ENCODE measurements at regions of chr17 and their contacts with region 1.

Region 1: DNA sequence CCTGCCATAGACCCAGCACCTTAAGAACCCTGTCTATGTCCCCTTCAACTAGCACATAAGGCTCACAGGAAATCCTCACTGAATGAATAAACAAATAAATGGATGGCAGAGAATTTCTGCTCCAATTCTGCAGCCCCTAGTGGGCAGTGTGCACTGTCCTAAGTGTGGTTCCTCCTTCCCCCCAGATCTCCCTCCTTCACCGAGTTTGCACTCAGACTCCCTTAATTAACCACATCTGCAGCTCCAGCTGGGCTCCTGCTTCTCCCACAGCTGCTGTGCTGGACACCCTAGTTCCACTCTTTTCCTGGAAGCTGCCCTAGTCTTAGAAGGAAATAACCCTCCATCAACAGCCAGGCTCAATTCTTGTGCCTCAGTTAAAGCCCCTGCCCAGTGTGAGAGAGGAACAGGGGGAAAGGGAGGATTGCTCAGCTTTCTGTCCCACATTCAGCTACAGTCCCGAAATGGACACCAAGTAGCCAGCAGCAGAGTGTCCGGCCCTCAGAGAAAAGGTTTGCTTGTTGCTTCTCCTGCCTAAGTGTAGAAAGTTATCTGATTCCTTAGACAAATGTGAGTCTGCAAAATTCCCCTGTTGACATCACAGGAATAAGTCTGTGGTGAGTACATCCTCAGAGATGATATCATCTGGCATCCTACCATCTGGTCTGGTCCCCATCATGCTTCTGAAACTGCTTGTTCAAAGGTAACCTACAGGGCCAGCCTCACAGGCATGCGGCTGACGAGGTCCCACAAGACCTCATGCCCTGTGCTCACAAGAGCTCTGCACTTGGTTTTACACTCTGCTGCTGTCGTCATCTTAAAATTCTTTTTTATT is 12.3 kb downstream of the LRRC3C start:
- DNase-seq: peak; percentile 67
- ATAC-seq: peak; percentile 87
- H3K4me3 Mint-ChIP-seq: no peak overlapping the region
- H3K27ac Mint-ChIP-seq: peak overlapping the region; percentile 59
- H3K4me1 Mint-ChIP-seq: peaks cover 22% of the 10 kb centered on the region
- H3K27me3 Mint-ChIP-seq: no peaks in the 10 kb centered on the region

Region 2: DNA sequence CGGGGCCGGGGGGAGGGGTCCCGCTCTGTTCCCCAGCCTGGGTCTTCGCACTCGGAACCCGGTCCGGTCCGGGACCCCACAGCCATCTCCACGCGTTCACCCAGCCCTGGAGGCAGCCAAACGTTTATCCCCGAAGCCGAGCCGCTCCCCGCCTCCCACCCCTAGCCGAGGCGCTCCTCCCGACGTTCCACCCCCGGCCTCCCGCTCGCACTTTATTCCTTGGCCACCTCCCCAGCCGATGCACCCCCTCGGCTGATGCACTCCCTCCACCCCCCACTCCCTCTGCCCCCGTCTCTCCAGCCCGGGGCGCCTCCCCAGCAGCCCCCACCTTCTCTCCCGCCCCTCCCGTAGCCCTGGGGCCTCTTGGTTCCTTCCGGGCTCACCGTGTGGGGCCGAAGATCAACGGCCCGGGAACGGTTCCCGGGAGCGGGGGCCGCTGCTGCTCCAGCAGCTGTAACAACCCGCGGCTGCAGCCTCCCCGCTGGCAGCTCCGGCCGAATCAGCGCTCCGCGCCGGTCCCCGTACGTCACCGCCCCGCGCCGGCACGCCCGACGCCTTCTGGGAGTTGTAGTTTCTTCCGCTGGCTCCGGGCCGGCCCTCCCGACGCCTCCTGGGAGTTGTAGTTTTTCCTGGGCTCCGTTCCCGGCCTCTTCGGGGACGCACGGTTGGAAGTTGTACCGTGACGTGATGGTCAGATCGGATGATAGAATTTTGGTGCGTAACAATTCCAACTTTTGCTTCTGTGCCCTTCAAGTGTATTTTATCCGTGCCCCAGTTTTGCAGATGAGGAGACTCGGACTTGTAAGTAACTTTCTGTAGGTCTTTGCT is 12.5 kb before region 1 on chr17 and contains the starts of genes LRRC3C and ORMDL3:
- CTCF ChIA-PET with region 1: interaction called, 11 read pairs
- POLR2A ChIA-PET with region 1: interaction called, 18 read pairs
- DNase-seq: peak; percentile 94
- ATAC-seq: peak; percentile 81
- H3K4me3 Mint-ChIP-seq: peak within 1 kb of the TSS; percentile 86
- H3K27ac Mint-ChIP-seq: peak within 1 kb of the TSS; percentile 88
- H3K4me1 Mint-ChIP-seq: peaks cover 53% of the 10 kb centered on the region
- H3K27me3 Mint-ChIP-seq: no peaks in the 10 kb centered on the region
- total RNA-seq, gene LRRC3C: not detected
- total RNA-seq, gene ORMDL3: 151 to 168 TPM

Region 3: DNA sequence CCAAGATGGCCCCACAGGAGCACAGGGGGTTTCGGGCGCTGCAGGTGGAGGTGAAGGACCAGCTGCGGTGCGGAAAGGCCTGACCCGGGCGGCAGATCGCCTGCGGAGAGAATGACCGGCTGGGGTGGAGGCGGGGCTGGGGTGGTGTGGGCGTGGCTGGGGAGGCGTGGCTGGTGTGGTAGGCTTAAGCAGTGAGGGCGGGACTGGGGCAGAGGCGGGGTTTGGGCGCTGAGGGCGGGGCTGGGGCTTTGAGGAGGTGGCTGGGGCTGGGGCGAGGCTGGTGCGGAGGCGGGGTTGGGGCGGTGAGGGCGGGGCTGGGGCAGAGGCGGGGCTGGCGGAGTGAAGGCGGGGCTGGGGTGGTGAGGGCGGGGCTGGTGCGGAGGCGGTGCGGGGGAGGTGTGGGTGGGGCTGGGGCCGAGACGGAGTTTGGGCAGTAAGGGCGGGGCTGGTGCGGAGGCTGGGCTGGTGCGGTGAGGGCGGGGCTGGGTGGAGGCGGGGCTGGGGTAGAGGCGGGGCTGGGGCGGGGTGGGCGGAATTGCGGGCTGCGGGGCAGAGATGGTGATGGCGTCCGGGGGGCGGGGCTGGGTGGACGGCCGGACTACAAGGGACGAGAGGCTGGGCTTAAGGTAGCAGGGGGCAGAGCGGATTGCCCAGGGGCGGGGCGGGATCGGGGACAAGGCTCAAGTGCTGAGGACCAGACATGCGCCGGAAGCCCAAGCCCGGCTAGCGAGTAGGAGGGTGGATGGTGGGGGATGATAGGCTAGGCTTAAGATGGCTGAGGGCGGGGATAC is 13.1 kb after region 1 on chr17:
- CTCF ChIA-PET with region 1: interaction called, 18 read pairs
- POLR2A ChIA-PET with region 1: interaction called, 4 read pairs
- DNase-seq: peak; percentile 97
- ATAC-seq: peak; percentile 86
- H3K4me3 Mint-ChIP-seq: peak overlapping the region; percentile 77
- H3K27ac Mint-ChIP-seq: peak overlapping the region; percentile 88
- H3K4me1 Mint-ChIP-seq: peaks cover 29% of the 10 kb centered on the region
- H3K27me3 Mint-ChIP-seq: peaks cover 2% of the 10 kb centered on the region

Region 4: DNA sequence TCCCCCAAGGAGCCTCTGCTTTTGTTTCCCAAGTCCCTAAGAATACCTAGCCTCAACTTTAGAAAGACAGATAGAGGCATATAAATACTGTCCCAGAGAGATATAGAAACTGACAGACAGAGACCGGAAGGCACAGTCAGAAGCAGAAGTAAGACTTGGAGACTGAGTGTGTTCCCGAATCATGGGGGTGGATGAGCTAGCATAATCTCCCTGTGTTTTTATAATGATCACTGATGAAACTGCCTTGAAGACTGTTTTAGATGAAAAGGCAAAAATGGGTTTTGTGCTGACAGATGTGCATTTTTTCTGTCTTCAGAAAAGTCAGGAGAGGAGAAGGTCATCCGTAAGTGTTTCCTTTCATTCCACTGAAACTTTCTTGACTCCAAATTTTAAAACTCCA is 32.5 kb after region 1 on chr17:
- CTCF ChIA-PET with region 1: no interaction called
- POLR2A ChIA-PET with region 1: no interaction called
- DNase-seq: no peak
- ATAC-seq: no peak
- H3K4me3 Mint-ChIP-seq: no peak overlapping the region
- H3K27ac Mint-ChIP-seq: no peak overlapping the region
- H3K4me1 Mint-ChIP-seq: no peaks in the 10 kb centered on the region
- H3K27me3 Mint-ChIP-seq: peaks cover 23% of the 10 kb centered on the region

Region 5: DNA sequence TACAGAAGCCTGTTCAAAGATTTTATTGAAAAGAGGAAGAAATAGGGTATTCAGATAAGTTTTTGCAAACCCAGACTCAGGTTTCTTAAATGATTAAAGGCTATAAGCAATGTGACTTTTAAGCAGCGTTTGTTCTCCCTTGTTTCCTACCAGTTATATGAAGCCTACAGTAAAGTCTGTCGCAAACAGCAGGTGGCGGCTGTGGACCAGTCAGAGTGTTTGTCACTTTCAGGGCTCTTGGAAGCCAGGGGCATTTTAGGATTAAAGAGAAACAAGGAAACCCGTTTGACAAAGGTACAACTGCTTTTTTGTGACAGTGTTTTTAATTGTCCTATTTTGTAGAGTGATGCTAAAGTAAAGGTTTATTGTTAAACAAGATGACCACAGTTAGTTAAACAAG is 361.5 kb after region 1 on chr17:
- CTCF ChIA-PET with region 1: no interaction called
- POLR2A ChIA-PET with region 1: no interaction called
- DNase-seq: no peak
- ATAC-seq: no peak
- H3K4me3 Mint-ChIP-seq: no peak overlapping the region
- H3K27ac Mint-ChIP-seq: no peak overlapping the region
- H3K4me1 Mint-ChIP-seq: peaks cover 21% of the 10 kb centered on the region
- H3K27me3 Mint-ChIP-seq: no peaks in the 10 kb centered on the region